ENCODE measurements at regions of chr6 and their contacts with region 1.

Region 1: GRCh38 chr6:100105138-100105753 is 111.2 kb upstream of the MCHR2 start:
- DNase-seq: no peak
- ATAC-seq: no peak
- H3K4me3 ChIP-seq: no peak overlapping the region
- H3K27ac ChIP-seq: no peak overlapping the region
- H3K4me1 ChIP-seq: no peaks in the 10 kb centered on the region
- H3K27me3 ChIP-seq: no peaks in the 10 kb centered on the region
- CTCF ChIP-seq: no peak
- EP300 ChIP-seq: no peak
- POLR2A ChIP-seq: no peak
- RAD21 ChIP-seq: no peak

Region 2: DNA sequence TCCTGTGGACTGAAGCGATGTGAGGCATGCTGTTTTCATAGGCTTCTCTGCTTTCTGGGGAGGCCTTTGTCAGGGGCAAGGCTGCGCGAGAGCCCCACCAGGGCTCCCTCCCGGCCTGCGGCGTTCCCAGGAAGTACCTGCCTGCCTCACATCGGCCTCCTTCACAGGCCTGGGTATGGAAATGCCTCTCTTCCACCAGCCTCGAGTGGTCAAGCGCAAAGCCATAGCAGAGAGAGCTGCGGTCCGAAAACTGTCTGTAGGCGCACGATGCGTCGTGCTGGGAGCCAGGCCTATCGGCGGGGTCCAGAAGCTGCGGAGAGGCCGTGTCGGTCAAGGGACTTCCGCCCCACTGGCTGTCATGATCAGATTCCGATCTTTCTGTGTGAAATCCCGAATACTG is 288.2 kb after region 1 on chr6:
- CTCF ChIA-PET with region 1: no interaction called
- POLR2A ChIA-PET with region 1: no interaction called
- in situ Hi-C with region 1: no loop called
- intact Hi-C with region 1: no loop called
- DNase-seq: peak in 1 of 4 experiments; percentile 8
- ATAC-seq: no peak; the same call in 2 of the 3 replicates
- H3K4me3 ChIP-seq: no peak overlapping the region
- H3K27ac ChIP-seq: no peak overlapping the region
- H3K4me1 ChIP-seq: peaks cover 0 to 4% of the 10 kb centered on the region in 2 experiments; a peak in 1 of 5 replicates
- H3K27me3 ChIP-seq: peaks cover 13 to 17% of the 10 kb centered on the region in 2 experiments
- CTCF ChIP-seq: no peak
- EP300 ChIP-seq: no peak
- POLR2A ChIP-seq: no peak
- RAD21 ChIP-seq: no peak

Region 3: DNA sequence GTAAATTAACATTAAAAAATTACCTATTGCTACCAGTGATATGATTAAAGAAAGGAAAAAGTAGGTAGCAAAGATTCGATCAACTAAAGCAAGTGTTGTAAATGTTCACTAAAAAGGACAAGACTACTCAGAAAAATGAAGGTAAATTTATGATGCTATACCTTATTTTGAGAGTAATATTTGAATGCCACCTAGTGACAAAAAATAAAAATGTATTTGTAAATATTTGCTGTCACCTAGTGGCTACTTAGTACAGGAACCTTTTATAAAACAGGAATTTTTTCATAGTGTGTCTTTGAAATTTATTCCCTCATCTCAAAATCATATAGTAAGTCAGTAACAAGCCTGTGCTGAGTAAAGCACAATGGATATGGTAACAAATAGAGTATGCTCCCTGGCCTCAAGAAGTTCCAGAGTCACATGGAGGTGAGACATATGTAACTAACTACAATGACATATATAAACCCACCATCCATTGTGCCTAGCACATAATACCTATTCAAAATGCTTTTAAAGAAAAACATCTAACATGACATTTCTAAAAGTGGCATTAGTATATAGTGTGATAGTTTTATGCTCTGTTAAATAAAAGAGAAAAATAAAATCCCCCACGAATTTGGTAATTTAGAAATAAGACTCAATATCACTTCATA is 552.6 kb after region 1 on chr6:
- CTCF ChIA-PET with region 1: interaction called, 26 read pairs
- POLR2A ChIA-PET with region 1: no interaction called
- in situ Hi-C with region 1: loop called (anchors 10 kb)
- intact Hi-C with region 1: no loop called
- DNase-seq: peak in 1 of 4 experiments; percentile 6
- ATAC-seq: peak; percentile 59; the same call in 2 of the 3 replicates
- H3K4me3 ChIP-seq: no peak overlapping the region
- H3K27ac ChIP-seq: no peak overlapping the region
- H3K4me1 ChIP-seq: no peaks in the 10 kb centered on the region
- H3K27me3 ChIP-seq: no peaks in the 10 kb centered on the region
- CTCF ChIP-seq: peak; percentile 44 to 98 (median 95); a peak in 5 of 6 replicates
- EP300 ChIP-seq: no peak
- POLR2A ChIP-seq: no peak
- RAD21 ChIP-seq: peak; percentile 60 to 70

Region 4: DNA sequence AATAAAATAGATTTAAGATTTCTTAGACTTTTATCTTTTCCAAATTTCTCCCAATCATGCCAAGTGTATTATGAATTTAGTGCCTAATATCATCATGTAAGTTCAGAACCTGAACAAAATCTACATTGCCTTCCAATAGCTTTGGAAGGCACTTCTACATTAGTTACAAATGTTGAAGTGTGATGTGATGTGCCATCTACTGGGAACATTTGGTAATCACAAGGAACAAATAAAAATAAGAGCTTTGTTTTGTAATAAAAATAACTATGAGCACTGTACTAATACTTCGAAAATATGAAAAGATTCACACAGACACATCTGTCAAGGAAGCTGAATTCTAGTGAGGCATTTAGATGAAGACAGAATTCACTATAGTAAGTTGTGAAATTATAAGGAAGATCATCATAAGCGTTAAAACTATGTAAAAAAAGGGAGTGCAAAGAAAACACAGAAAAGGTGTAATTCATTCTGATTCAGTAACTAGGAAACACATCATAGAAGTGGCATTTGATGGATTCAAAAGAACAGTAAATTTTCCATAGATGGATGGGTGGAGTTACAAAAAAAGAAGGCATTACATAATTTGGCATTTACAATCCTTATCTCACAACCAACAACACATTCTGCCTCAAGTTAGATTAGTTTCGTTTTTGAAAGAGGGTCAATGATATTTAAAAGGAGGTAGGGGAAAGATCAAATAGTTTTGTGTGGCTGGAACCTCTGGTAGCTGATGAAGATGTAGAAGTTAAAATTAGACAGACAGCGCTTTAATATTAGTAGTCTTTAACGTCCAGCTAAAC is 614.8 kb after region 1 on chr6:
- CTCF ChIA-PET with region 1: no interaction called
- POLR2A ChIA-PET with region 1: no interaction called
- in situ Hi-C with region 1: no loop called
- intact Hi-C with region 1: loop called (anchors 1 kb)
- DNase-seq: peak in 2 of 4 experiments; percentile 9 to 54
- ATAC-seq: peak; percentile 78
- H3K4me3 ChIP-seq: no peak overlapping the region
- H3K27ac ChIP-seq: peak overlapping the region; percentile 63; the same call in 1 of the 3 replicates
- H3K4me1 ChIP-seq: no peaks in the 10 kb centered on the region; a peak in 2 of 5 replicates
- H3K27me3 ChIP-seq: no peaks in the 10 kb centered on the region
- CTCF ChIP-seq: peak in 1 of 3 experiments; percentile 59; a peak in 3 of 6 replicates
- EP300 ChIP-seq: peak; percentile 7; the same call in 1 of the 2 replicates
- POLR2A ChIP-seq: no peak
- RAD21 ChIP-seq: peak in 1 of 2 experiments; percentile 34; a peak in 2 of 4 replicates

Measured in K562 (cell line).